IMR-90 (cell line): ENCODE measurements at regions of chr1 and their contacts with region 1.

Region 1: DNA sequence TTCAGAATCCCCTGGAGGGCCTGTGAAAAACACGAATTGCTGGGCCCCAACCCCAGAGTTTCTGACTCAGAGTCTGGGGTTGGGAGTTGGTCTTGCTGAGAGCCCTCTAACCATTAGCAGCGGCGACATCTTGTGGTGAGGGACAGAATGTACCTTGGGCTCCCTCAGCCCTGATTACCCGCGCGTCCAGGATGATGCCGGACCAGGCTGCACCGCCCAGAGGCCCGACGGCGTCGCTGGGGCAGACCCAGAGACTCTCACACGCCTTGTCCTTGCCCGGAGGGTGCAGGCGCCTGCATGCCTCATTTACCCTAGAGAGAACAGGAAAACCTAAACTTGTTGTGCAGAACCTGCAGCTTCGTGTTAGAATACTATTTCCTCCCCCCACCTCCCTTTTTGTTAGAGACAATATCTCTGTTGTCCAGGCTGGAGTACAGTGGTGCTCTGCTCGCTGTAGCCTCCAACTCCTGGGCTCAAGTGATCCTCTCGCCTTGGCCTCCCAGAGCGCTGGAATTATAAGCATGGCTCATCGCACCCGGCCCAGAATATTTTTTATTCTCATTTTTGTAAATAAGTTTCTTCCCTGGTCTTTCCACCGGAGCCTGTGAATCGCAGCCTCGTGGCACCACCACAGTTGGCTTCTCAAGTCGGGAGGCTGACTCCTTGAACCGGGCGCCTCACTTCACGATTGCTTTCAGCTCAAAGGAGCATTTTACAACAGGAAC is 22.2 kb upstream of the RD3 start:
- DNase-seq: peak; percentile 84
- ATAC-seq: peak; percentile 94
- H3K4me3 ChIP-seq: no peak overlapping the region
- H3K27ac ChIP-seq: no peak overlapping the region
- H3K4me1 ChIP-seq: peaks cover 5% of the 10 kb centered on the region; the same call in 1 of the 2 replicates
- H3K27me3 ChIP-seq: no peaks in the 10 kb centered on the region
- CTCF ChIP-seq: peak; percentile 89
- POLR2A ChIP-seq: no peak
- RAD21 ChIP-seq: peak; percentile 89

Region 2: DNA sequence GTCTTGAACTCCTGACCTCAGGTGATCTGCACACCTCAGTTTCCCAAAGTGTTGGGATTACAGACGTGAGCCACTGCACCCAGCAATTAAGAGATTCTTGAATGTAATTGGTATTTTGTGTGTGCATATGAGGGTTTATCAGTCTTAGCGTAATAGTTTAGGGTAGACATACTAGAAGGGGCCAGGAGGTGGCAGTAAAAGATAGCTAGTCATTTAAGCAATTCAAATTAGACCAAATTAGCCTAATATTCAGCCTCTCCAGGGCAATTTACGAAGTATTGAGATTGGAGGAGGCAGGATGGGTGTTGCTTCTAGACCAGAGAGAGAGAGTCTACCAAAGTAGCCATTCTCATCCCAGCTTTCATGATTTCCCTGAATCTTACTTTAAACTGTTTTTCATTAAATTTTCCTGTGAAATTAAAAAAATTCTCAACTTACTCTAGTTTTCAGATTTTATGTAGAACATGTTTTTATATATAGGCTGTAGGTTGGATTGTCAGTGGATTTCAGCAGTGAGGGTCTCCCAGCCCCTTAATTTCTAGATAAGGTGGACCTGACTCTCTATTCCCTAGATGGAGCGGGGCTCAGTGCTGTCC is 1065.8 kb before region 1 on chr1:
- CTCF ChIA-PET with region 1: no interaction called
- POLR2A ChIA-PET with region 1: no interaction called
- dilution Hi-C with region 1: no loop called
- in situ Hi-C with region 1: no loop called
- intact Hi-C with region 1: loop called (anchors 2 kb)
- DNase-seq: peak; percentile 69
- ATAC-seq: peak; percentile 93
- H3K4me3 ChIP-seq: no peak overlapping the region
- H3K27ac ChIP-seq: no peak overlapping the region
- H3K4me1 ChIP-seq: no peaks in the 10 kb centered on the region
- H3K27me3 ChIP-seq: no peaks in the 10 kb centered on the region
- CTCF ChIP-seq: peak; percentile 85
- POLR2A ChIP-seq: no peak
- RAD21 ChIP-seq: peak; percentile 87

Region 3: DNA sequence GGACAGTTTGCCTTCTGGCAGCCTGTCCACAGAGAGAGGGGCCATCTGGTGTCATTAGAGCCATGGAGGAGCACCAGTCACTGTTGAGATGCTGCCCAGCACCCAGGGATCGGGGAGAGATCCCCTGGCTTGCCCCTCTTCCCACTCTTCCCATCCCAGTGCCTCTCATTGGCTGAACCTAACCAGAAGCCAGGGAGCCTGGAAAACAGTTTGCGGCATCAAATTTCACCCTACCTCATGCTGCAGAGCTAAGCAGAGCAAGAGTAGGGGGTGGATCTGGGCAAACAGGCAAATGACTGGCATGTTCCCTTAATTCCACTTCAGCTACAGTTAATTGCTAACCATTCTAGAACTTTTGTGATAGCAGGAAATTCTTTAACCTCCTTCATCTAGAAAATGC is 168.5 kb before region 1 on chr1:
- CTCF ChIA-PET with region 1: no interaction called
- POLR2A ChIA-PET with region 1: no interaction called
- dilution Hi-C with region 1: no loop called
- in situ Hi-C with region 1: no loop called
- intact Hi-C with region 1: no loop called
- DNase-seq: peak; percentile 53
- ATAC-seq: peak; percentile 83
- H3K4me3 ChIP-seq: no peak overlapping the region
- H3K27ac ChIP-seq: no peak overlapping the region
- H3K4me1 ChIP-seq: peaks cover 5% of the 10 kb centered on the region; the same call in 1 of the 2 replicates
- H3K27me3 ChIP-seq: no peaks in the 10 kb centered on the region
- CTCF ChIP-seq: no peak
- POLR2A ChIP-seq: no peak
- RAD21 ChIP-seq: no peak

Region 4: GRCh38 chr1:211469938-211470529 is 44.2 kb before region 1 on chr1:
- CTCF ChIA-PET with region 1: interaction called, 5 read pairs
- POLR2A ChIA-PET with region 1: no interaction called
- dilution Hi-C with region 1: no loop called
- in situ Hi-C with region 1: no loop called
- intact Hi-C with region 1: loop called (anchors 1 kb)
- DNase-seq: peak; percentile 64
- ATAC-seq: peak; percentile 100
- H3K4me3 ChIP-seq: no peak overlapping the region
- H3K27ac ChIP-seq: no peak overlapping the region
- H3K4me1 ChIP-seq: no peaks in the 10 kb centered on the region
- H3K27me3 ChIP-seq: peaks cover 17% of the 10 kb centered on the region
- CTCF ChIP-seq: peak; percentile 81
- POLR2A ChIP-seq: no peak
- RAD21 ChIP-seq: peak; percentile 61

Region 5: GRCh38 chr1:211566431-211567025 is 52.3 kb after region 1 on chr1:
- CTCF ChIA-PET with region 1: no interaction called
- POLR2A ChIA-PET with region 1: no interaction called
- dilution Hi-C with region 1: no loop called
- in situ Hi-C with region 1: no loop called
- intact Hi-C with region 1: no loop called
- DNase-seq: no peak
- ATAC-seq: no peak
- H3K4me3 ChIP-seq: no peak overlapping the region
- H3K27ac ChIP-seq: no peak overlapping the region
- H3K4me1 ChIP-seq: no peaks in the 10 kb centered on the region
- H3K27me3 ChIP-seq: peaks cover 4% of the 10 kb centered on the region; the same call in 1 of the 2 replicates
- CTCF ChIP-seq: no peak
- POLR2A ChIP-seq: no peak
- RAD21 ChIP-seq: no peak

Region 6: DNA sequence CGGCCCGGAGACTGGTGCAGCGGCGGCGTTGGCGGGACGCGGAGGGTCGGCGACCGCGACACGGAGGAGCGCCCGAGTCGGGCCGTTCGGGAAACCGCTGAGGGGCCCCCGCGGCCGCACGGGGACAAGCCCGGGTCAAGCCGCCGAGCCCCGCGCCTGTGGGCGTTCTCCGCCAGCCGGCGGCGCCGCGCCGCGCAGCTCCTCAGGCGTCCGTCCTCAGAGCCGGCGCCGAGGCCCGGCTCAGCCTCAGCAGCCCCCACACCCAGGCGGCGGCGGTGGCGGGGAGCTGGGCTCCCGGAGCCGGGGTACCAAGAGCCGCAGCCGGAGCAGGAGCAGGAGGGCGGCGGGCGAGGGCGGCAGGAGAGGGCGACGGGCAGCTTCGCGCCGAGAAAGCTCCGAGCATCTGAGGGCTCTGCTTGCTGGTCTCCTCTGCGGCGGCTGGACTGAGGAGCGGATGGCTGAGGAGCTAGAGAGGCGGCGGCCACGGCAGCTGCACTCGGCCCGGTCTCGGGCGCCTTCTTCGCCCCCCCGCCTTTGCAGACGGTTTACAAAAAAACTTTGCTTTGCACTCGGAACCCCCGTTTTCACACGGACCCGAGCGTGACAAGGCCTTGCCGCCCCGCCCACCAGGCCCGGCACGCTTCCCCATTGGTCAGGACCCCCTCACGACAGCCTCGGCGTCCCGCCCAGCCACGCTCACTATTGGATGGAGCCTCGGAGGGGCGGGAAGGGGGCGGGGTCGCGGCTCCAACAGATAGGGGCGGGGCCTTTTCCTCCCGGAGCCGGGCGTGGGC is 64.6 kb after region 1 on chr1 and contains the start of gene SLC30A1:
- CTCF ChIA-PET with region 1: no interaction called
- POLR2A ChIA-PET with region 1: no interaction called
- dilution Hi-C with region 1: no loop called
- in situ Hi-C with region 1: no loop called
- intact Hi-C with region 1: loop called (anchors 2 kb)
- DNase-seq: peak; percentile 97
- ATAC-seq: peak; percentile 93
- H3K4me3 ChIP-seq: peak within 1 kb of the TSS; percentile 96
- H3K27ac ChIP-seq: peak within 1 kb of the TSS; percentile 91
- H3K4me1 ChIP-seq: peaks cover 13% of the 10 kb centered on the region
- H3K27me3 ChIP-seq: no peaks in the 10 kb centered on the region
- CTCF ChIP-seq: 0 out of 2 replicates have a peak, but pooled peaks have one; percentile 13
- POLR2A ChIP-seq: peak; percentile 74
- RAD21 ChIP-seq: no peak
- total RNA-seq, gene SLC30A1: 8.4 and 17.8 TPM in 2 replicates

Region 7: GRCh38 chr1:211625040-211625439 is 110.8 kb after region 1 on chr1:
- CTCF ChIA-PET with region 1: no interaction called
- POLR2A ChIA-PET with region 1: no interaction called
- dilution Hi-C with region 1: no loop called
- in situ Hi-C with region 1: no loop called
- intact Hi-C with region 1: loop called (anchors 1 kb)
- DNase-seq: peak; percentile 51
- ATAC-seq: peak; percentile 62
- H3K4me3 ChIP-seq: no peak overlapping the region
- H3K27ac ChIP-seq: no peak overlapping the region
- H3K4me1 ChIP-seq: peaks cover 3% of the 10 kb centered on the region; the same call in 1 of the 2 replicates
- H3K27me3 ChIP-seq: no peaks in the 10 kb centered on the region
- CTCF ChIP-seq: peak; percentile 52
- POLR2A ChIP-seq: no peak
- RAD21 ChIP-seq: peak; percentile 62

Region 8: GRCh38 chr1:211654838-211655787 is 140.9 kb after region 1 on chr1:
- CTCF ChIA-PET with region 1: interaction called, 6 read pairs
- POLR2A ChIA-PET with region 1: no interaction called
- dilution Hi-C with region 1: no loop called
- in situ Hi-C with region 1: loop called (anchors 5 kb)
- intact Hi-C with region 1: loop called (anchors 1 kb)
- DNase-seq: peak; percentile 84
- ATAC-seq: peak; percentile 98
- H3K4me3 ChIP-seq: no peak overlapping the region
- H3K27ac ChIP-seq: no peak overlapping the region
- H3K4me1 ChIP-seq: peaks cover 8% of the 10 kb centered on the region
- H3K27me3 ChIP-seq: no peaks in the 10 kb centered on the region
- CTCF ChIP-seq: peak; percentile 99
- POLR2A ChIP-seq: peak; percentile 61; the same call in 1 of the 2 replicates
- RAD21 ChIP-seq: peak; percentile 100